AG04449 (cell line): ENCODE measurements at regions of chr3 and their contacts with region 1.

Region 1: GRCh38 chr3:25648107-25648535 is 16.6 kb downstream of the TOP2B start:
- DNase-seq: peak; percentile 12
- H3K4me3 ChIP-seq: no peak overlapping the region
- CTCF ChIP-seq: peak; percentile 81

Region 2: DNA sequence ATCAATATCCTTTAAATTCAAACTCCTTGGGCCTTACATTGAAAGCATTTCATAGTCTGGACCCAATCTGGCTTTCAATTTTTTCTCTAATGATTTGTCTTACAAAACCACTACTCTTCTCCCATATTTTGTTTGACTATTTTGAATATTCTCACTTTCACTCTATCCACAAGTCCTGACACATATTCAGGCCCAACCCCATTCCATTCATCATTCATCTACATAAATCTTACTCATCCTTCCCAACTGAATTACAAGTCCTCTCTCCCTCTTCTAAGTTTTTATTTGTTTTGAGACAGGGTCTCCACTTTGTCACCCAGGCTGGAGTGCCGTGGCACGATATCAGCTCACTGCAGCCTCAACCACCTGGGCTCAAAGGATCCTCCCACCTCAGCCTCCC is 27.0 kb before region 1 on chr3:
- CTCF ChIA-PET with region 1: interaction called, 12 read pairs
- POLR2A ChIA-PET with region 1: no interaction called
- DNase-seq: no peak
- H3K4me3 ChIP-seq: no peak overlapping the region
- CTCF ChIP-seq: no peak

Region 3: GRCh38 chr3:25661694-25662437 is 13.7 kb after region 1 on chr3:
- CTCF ChIA-PET with region 1: interaction called, 64 read pairs
- POLR2A ChIA-PET with region 1: no interaction called
- DNase-seq: no peak
- H3K4me3 ChIP-seq: peak overlapping the region; percentile 33
- CTCF ChIP-seq: no peak

Region 4: DNA sequence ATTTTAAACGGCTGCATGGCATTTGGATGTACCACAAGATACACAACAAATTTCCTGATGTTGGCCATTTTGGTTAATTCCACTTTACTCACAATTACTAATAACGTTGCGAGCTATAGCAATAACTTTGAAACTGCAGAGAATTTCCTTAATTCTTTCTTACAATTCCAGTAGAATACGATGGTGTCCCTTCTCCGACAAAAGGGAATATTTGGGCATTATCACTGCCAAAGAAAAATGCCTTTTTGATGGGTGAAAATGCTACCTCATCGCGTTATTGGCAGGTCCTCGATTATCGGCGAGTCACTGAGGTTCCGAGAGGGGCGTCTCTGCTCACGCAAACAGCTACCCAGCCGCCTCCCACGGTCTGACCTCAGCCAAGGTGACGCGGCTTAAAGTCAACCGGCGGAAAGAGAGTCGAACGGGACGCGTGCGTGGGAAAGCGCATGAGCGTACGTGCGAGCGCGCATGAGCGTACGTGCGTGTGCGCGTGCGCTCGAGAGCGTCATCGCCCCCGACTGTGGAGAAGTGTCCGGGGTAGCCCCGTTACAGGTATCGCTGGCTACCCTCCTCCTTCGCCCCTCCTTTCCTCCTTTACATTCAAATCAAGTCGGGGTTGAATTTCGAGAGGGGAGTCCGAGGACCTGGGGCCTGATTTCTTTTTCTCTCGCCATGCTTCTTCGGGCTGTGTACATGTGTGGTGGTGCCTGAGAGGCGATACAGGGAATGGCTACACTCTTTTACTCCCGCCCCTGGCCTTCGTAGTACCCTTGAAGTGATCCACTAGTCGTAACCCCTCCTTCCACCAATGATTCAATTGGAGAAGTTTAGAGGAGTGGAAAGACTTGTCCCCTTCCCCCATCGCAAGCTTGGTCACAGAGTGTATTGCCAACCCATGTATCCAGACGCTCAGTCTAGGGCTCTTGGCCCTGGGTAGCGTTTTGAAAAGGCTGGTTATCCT is 141.8 kb after region 1 on chr3 and contains the start of gene OXSM:
- CTCF ChIA-PET with region 1: interaction called, 15 read pairs
- POLR2A ChIA-PET with region 1: no interaction called
- DNase-seq: peak; percentile 88
- H3K4me3 ChIP-seq: peak within 1 kb of the TSS; percentile 81
- CTCF ChIP-seq: no peak

Region 5: DNA sequence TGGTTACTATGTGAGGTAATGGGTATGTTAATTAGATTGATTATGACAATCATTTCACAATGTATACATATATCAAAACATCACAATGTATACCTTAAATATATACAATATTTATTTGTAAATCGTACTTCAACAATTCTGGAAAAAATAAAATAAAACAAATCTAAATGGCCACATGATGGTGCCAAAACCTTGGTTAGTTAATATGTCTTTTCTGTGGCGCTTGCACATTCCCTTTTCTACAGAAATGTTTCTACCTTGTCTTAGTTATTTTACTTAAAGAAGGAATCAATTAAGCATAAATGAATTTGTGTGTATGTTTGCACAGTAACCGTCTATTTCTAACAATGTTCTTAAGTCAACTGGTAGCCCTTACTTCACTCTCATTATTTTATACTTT is 195.2 kb after region 1 on chr3:
- CTCF ChIA-PET with region 1: interaction called, 179 read pairs
- POLR2A ChIA-PET with region 1: no interaction called
- DNase-seq: no peak
- H3K4me3 ChIP-seq: no peak overlapping the region
- CTCF ChIP-seq: no peak

Region 6: DNA sequence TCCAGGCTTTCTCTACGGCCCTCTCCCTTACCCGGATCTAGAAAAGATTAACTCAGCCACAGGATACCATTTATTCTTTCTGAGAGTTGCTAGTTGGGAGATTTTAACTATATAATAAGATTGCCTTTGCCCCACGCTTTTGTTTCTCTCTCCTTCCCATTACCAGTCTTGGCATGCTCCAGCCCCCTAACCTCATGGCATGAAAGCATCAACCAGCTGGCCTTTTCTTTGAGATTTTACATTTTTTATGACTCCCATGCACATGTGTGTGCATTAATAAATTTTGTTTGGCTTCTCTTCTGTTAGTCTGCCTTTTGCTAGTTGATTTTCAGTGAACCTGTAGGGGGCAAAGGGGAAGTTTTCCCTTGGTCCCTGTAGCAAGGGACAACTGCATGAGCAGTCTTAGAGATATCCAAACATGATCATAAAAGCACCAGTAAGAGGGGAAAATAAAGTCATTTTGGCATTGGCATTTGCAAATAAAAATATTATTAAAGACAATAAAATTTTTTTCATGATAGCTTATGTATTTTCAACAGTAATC is 215.4 kb after region 1 on chr3:
- CTCF ChIA-PET with region 1: interaction called, 179 read pairs
- POLR2A ChIA-PET with region 1: no interaction called
- DNase-seq: no peak
- H3K4me3 ChIP-seq: no peak overlapping the region
- CTCF ChIP-seq: no peak